ENCODE measurements at regions of chr20 and their contacts with region 1.

Region 1: DNA sequence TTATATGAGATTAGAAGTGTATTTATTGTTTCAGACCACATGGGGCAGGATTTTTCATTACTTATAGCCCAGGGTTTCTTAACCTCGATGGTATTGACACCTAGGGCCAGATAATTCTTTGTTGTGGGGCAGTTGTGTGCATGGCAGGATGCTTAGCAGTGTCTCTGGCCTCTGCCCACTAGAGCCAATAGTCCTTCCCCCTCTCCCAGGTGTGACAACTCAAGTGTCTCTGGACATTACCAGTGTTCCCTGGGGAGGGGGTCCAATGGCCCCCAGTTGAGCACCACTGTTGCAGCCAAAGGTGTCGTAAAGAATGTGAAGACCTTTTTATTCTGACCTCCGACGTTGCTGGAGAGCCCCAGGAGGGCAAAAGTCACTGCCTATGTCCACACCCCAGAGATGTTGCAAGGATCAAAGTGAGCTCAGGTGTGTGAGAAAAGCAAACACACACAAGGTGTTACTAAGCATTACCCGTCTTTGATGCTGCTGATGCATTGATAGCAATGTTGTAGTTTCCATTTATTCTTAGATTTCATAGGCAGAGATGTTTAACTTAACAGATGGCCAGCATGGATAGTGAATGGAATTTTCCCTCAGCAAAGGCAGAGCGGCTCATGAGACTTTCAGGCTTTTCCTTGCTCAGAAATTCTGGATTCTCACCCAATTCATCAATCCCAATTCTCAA is 22.2 kb downstream of the BANF2 start:
- DNase-seq: no peak
- H3K4me3 Mint-ChIP-seq: no peak overlapping the region
- H3K27ac Mint-ChIP-seq: no peak overlapping the region
- H3K4me1 Mint-ChIP-seq: no peaks in the 10 kb centered on the region
- H3K27me3 Mint-ChIP-seq: peaks cover 4% of the 10 kb centered on the region

Region 2: GRCh38 chr20:17806739-17807441 is 84.9 kb after region 1 on chr20:
- CTCF ChIA-PET with region 1: no interaction called
- intact Hi-C with region 1: loop called (anchors 10 kb)
- DNase-seq: no peak
- H3K4me3 Mint-ChIP-seq: no peak overlapping the region
- H3K27ac Mint-ChIP-seq: no peak overlapping the region
- H3K4me1 Mint-ChIP-seq: no peaks in the 10 kb centered on the region
- H3K27me3 Mint-ChIP-seq: no peaks in the 10 kb centered on the region